Breast epithelium (tissue), 4 donors: ENCODE measurements at regions of chr14 and their contacts with region 1.

Region 1: GRCh38 chr14:68795597-68796417 is 2.9 kb upstream of the ZFP36L1 start:
- DNase-seq: peak in 1 of 2 donors; percentile 82
- H3K4me3 ChIP-seq: peak overlapping the region; percentile 80 to 95 (median 94)
- H3K27ac ChIP-seq: peak overlapping the region; percentile 98 to 100
- H3K4me1 ChIP-seq: peaks cover 4% of the 10 kb centered on the region in 2 donors
- H3K27me3 ChIP-seq: no peaks in the 10 kb centered on the region
- CTCF ChIP-seq: peak; percentile 96 to 99 (median 99)
- POLR2A ChIP-seq: peak; percentile 57

Region 2: GRCh38 chr14:68563246-68564131 is 232.3 kb before region 1 on chr14:
- intact Hi-C with region 1: loop called (anchors 10 kb)
- DNase-seq: no peak
- H3K4me3 ChIP-seq: peak overlapping the region in 2 of 3 donors; percentile 39 to 54
- H3K27ac ChIP-seq: peak overlapping the region; percentile 90
- H3K4me1 ChIP-seq: peaks cover 5 to 36% of the 10 kb centered on the region in 2 donors
- H3K27me3 ChIP-seq: no peaks in the 10 kb centered on the region
- CTCF ChIP-seq: no peak
- POLR2A ChIP-seq: no peak

Region 3: DNA sequence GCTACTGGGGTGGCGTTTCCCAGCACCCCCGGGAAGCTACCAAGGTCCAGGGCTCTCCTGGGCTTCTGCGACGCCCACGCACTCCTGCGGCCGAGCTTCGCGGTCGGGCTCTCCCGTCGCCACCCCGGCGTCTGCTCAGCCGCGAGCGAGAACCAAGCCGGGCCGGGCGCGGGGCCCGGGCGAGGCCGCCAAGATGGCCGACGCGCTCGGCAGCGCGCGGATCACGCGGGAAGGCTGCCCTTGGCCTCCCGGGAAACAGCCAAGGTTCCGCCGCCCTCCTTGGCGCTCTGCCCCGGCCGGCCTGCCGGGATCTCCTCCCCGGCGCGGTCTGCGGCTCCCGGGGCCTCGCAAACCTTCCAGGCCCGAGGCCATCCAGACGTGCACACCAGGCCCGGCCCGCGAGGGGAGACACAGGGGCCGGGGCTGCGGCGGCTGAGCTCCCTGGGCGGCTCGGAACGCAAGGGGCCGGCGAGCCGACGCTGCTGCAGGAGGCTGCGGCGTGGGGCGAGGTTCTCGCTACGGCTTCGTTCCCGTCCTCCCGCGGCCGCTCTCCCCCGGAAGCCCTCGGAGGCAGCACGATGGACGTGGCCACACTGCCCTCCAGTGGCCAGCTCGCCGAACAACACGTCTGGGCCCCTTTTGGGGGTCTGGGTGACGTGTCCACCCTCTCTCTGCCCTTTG is 20.6 kb after region 1 on chr14:
- intact Hi-C with region 1: no loop called
- DNase-seq: peak; percentile 82 to 89
- H3K4me3 ChIP-seq: peak overlapping the region; percentile 44 to 80 (median 58)
- H3K27ac ChIP-seq: peak overlapping the region; percentile 99
- H3K4me1 ChIP-seq: peaks cover 12 to 17% of the 10 kb centered on the region in 2 donors
- H3K27me3 ChIP-seq: no peaks in the 10 kb centered on the region
- CTCF ChIP-seq: peak; percentile 98 to 100 (median 99)
- POLR2A ChIP-seq: no peak

Region 4: DNA sequence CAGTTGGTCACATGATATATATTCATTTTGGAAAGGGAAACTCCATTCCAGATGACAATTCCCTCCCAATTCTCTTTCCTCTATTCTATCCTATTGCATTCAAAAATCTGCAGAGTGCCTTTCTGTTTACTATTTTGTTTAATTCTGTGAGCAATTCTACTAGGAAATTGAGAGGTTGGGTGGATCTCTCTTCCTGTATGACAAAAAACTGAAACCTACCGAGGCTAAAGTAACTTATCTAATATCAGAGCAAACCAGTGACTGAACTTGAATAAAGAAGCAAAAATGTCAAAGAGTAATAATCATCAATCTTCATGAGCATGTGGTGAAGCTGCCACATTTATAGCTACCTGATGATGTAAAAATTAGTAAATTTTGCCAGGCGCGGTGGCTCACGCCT is 199.9 kb after region 1 on chr14:
- intact Hi-C with region 1: no loop called
- DNase-seq: no peak
- H3K4me3 ChIP-seq: no peak overlapping the region
- H3K27ac ChIP-seq: no peak overlapping the region
- H3K4me1 ChIP-seq: no peaks in the 10 kb centered on the region
- H3K27me3 ChIP-seq: no peaks in the 10 kb centered on the region
- CTCF ChIP-seq: no peak
- POLR2A ChIP-seq: no peak